ENCODE measurements at regions of chr14 and their contacts with region 1.

Region 1: DNA sequence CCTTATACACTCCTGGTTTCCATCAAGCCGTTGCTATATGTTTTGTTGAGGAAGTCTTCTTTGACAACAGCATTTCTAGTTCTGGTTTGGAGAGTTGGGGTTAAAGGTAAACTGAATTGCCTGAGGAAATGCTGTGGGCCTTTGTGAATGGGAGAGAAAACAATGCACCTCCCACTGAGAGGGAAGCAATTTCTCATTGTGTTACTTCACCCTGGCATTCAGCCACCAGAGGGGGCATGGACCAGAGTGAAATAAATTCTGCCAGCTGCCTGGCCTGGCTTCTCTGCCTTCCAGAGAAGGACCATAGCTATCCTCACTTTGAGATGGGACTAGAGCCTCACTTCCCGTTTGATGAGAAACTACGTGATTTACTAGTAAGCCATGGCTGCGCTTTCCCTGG is 475.3 kb downstream of the EGLN3 start:
- DNase-seq: peak; percentile 75
- ATAC-seq: peak; percentile 86
- H3K4me3 Mint-ChIP-seq: no peak overlapping the region
- H3K27ac Mint-ChIP-seq: no peak overlapping the region
- H3K4me1 Mint-ChIP-seq: peaks cover 79% of the 10 kb centered on the region
- H3K27me3 Mint-ChIP-seq: no peaks in the 10 kb centered on the region
- CTCF ChIP-seq: peak; percentile 43; the same call in 1 of the 2 replicates

Region 2: DNA sequence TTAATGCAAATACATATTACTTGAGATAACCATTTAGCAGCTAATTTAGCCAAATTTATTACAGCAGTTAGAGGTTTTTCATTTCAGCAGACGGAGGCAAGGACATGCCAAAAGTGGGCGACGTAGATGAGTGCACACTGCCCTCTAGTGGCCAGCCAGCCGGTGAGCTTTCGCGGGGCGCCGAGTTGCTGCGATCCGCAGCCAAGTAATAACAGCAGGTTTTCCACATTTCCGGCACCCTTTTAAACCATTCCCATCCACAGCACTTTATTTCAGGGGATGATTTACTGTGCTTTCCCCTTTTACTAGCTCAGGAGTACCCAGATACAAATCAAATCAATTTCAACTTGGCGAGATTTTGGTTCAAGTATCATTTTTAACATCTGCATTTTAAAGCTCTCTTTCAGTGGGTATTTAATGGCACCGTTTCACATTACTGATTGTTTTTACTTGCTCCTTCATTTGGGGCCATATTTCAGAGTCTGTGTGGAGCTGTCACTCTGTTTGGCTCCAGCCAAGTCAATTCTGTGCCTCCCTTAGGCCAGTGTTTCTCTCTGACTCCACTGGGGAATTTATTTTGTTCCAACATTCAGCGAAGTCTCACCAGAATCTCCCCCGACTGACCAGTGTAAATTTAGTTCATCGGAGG is 317.2 kb after region 1 on chr14:
- CTCF ChIA-PET with region 1: interaction called, 13 read pairs
- POLR2A ChIA-PET with region 1: no interaction called
- DNase-seq: peak; percentile 88
- ATAC-seq: peak; percentile 78
- H3K4me3 Mint-ChIP-seq: no peak overlapping the region
- H3K27ac Mint-ChIP-seq: no peak overlapping the region
- H3K4me1 Mint-ChIP-seq: peaks cover 25% of the 10 kb centered on the region
- H3K27me3 Mint-ChIP-seq: no peaks in the 10 kb centered on the region
- CTCF ChIP-seq: peak; percentile 90